BJ (cell line): ENCODE measurements at regions of chr13 and their contacts with region 1.

Region 1: GRCh38 chr13:95834134-95834765 is 157.3 kb downstream of the DNAJC3 start:
- DNase-seq: peak; percentile 4
- H3K4me3 ChIP-seq: no peak overlapping the region
- H3K27me3 ChIP-seq: no peaks in the 10 kb centered on the region
- CTCF ChIP-seq: peak; percentile 88

Region 2: GRCh38 chr13:95536632-95537241 is 297.5 kb before region 1 on chr13:
- CTCF ChIA-PET with region 1: interaction called, 29 read pairs
- POLR2A ChIA-PET with region 1: no interaction called
- DNase-seq: no peak
- H3K4me3 ChIP-seq: no peak overlapping the region
- H3K27me3 ChIP-seq: peaks cover 3% of the 10 kb centered on the region; the same call in 1 of the 2 replicates
- CTCF ChIP-seq: peak; percentile 49

Region 3: GRCh38 chr13:95630593-95630992 is 203.7 kb before region 1 on chr13:
- CTCF ChIA-PET with region 1: interaction called, 103 read pairs
- POLR2A ChIA-PET with region 1: no interaction called
- DNase-seq: no peak
- H3K4me3 ChIP-seq: no peak overlapping the region
- H3K27me3 ChIP-seq: no peaks in the 10 kb centered on the region
- CTCF ChIP-seq: no peak

Region 4: GRCh38 chr13:95822303-95822702 is 11.9 kb before region 1 on chr13:
- CTCF ChIA-PET with region 1: interaction called, 37 read pairs
- POLR2A ChIA-PET with region 1: no interaction called
- DNase-seq: no peak
- H3K4me3 ChIP-seq: no peak overlapping the region
- H3K27me3 ChIP-seq: no peaks in the 10 kb centered on the region
- CTCF ChIP-seq: no peak

Region 5: GRCh38 chr13:95982144-95982543 is 147.9 kb after region 1 on chr13:
- CTCF ChIA-PET with region 1: interaction called, 12 read pairs
- POLR2A ChIA-PET with region 1: no interaction called
- DNase-seq: no peak
- H3K4me3 ChIP-seq: no peak overlapping the region
- H3K27me3 ChIP-seq: no peaks in the 10 kb centered on the region
- CTCF ChIP-seq: no peak

Region 6: DNA sequence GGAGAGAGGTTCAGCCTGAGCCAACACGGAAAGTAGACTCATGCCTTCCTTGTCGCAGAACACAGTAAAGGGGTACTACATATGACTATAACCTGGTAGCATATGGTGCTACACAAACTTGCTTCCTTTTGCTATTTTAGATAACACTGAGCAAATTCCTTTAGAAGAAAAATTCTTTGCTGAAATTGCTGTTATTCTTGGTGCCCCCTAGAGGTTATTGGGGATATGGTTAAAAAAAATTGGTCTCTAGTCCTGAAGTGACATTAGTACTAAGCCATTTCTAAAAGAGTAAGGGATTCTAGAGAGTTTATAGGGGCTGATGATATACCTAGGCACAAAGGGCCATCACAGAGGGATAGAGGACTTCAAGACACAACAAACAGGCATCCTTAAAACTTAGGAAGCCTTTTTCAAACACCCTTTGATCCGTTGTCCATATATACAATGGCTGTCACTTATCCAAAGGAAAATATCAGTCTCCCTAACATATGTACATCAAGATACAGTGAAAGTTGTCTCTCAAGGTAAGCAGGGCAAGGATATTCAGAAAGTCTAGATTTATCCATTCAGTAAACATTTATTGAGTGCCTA is 241.8 kb after region 1 on chr13:
- CTCF ChIA-PET with region 1: no interaction called
- POLR2A ChIA-PET with region 1: no interaction called
- DNase-seq: no peak
- H3K4me3 ChIP-seq: no peak overlapping the region
- H3K27me3 ChIP-seq: no peaks in the 10 kb centered on the region
- CTCF ChIP-seq: peak; percentile 66